ENCODE measurements at regions of chr19 and their contacts with region 1.

Region 1: DNA sequence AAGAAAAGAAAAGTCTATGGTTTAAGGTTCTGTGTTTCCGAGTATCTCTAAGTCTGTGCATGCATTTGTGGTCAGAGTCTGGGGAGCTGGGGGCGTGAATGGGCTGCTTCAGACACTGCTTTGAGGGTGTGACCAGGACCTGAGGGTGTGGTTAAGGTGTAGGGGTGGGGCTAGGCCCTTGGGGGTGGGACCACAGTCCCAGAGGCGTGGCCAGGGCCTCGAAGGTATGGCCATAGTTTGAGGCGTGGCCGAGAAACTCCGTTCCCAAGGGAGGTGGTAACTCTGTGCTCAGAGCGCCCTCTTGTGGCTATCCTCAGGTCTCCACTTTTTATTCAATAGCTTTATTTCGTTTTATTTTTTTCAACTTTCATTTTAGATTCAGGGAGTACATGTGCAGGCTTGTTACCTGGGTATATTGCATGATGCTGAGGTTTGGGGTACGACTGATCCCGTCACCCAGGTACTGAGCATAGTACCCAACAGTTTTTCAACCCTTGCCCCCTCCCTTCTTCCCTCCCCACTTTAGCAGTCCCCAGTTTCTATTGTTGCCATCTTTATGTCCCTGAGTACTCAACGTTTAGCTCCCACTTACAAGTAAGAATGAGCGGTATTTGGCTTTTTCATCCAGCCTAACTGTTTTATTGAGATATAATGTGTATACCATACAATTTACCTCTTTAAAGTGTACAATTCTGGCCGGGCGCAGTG is 7.0 kb upstream of the CBLC start:
- DNase-seq: peak; percentile 94 to 99 (median 98)
- H3K4me3 ChIP-seq: peak overlapping the region in 1 of 3 experiments; percentile 46
- H3K4me3 Mint-ChIP-seq: peak overlapping the region; percentile 69 to 74
- H3K27ac ChIP-seq: peak overlapping the region in 1 of 2 donors; percentile 64
- H3K27ac Mint-ChIP-seq: peak overlapping the region; percentile 81 to 97 (median 93)
- H3K4me1 ChIP-seq: peaks cover 35 to 40% of the 10 kb centered on the region in 2 donors
- H3K4me1 Mint-ChIP-seq: peaks cover 40% of the 10 kb centered on the region
- H3K27me3 ChIP-seq: no peaks in the 10 kb centered on the region
- H3K27me3 Mint-ChIP-seq: peaks cover 0 to 23% (median 8%) of the 10 kb centered on the region in 3 donors
- CTCF ChIP-seq: peak; percentile 76

Region 2: DNA sequence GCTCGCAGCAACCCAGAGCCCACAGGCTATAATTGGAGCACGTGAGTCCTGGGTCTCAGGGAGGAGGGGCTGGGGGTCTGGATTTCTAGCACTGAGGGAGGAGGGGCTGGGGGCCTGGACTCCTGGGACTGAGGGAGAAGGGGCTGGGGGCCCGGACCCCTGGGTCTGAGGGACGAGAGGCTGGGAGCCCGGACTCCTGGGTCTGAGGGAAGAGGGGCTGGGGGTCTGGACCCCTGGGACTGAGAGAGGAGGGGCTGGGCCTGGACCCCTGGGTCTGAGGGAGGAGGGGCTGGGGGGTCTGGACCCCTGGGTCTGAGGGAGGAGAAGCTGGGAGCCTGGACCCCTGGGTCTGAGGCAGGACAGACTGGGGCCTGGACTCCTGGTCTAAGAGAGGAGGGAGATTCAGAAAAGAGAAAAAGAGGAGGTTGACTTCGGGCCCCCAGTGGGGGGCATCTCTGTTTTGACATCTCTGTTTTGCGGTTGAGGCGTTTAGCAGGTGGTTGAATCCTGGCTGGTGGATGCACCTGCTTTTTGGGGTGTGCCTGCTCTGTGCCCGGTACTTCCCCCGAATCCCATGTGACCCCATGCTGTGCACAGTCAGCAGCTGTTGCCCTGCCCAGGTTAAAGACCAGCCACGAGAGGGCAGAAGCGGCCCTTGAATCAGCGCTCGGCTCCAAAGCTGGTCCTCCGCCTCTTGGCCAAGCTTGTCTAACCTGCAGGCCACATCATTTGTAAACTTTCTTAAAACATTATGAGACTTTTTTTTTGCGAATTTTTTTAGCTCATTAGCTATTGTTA is 116.5 kb before region 1 on chr19:
- intact Hi-C with region 1: loop called in 1 of 2 experiments (anchors 1 kb)
- DNase-seq: peak; percentile 78 to 87 (median 78)
- H3K4me3 ChIP-seq: no peak overlapping the region
- H3K4me3 Mint-ChIP-seq: no peak overlapping the region
- H3K27ac ChIP-seq: no peak overlapping the region
- H3K27ac Mint-ChIP-seq: peak overlapping the region in 4 of 7 donors; percentile 18 to 68 (median 62)
- H3K4me1 ChIP-seq: no peaks in the 10 kb centered on the region
- H3K4me1 Mint-ChIP-seq: peaks cover 8% of the 10 kb centered on the region
- H3K27me3 ChIP-seq: no peaks in the 10 kb centered on the region
- H3K27me3 Mint-ChIP-seq: peaks cover 0 to 2% (median 2%) of the 10 kb centered on the region in 3 donors
- CTCF ChIP-seq: peak; percentile 81

Region 3: DNA sequence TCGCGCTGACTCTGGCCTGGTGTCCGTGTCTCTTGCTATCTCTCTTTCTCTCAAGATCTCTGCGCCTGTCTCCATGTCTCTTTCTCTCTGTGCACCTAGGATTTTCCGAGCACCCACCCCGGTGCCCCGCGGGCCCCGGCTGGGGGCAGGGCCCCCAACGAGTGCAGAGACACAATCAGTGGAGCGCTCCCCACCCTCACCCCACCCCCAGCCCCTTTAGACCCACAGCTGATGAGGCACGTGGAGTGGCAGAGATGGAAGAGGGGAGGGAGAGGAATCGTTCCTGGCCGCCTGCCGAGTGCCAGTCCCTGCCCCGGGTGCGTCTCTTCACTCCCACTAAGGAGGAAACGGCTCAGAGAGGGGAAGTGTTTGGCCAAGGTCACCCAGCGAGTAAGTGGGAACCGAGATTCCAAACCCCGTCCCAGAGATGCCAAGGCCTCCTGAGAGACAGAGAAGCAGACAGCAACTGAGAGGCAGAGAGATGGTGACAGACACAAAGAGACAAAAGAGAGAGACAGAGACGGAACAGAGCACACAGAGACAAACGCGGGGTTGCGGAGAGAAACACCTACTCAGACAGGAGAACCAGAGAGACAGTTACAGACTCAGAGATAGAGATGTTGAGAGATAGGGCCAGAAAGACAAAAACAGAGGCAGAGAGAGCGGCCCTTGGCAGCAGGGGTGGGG is 22.8 kb before region 1 on chr19:
- intact Hi-C with region 1: loop called in 1 of 2 experiments (anchors 2 kb)
- DNase-seq: peak; percentile 76 to 85 (median 84)
- H3K4me3 ChIP-seq: peak overlapping the region; percentile 45 to 96 (median 46)
- H3K4me3 Mint-ChIP-seq: peak overlapping the region; percentile 86 to 93
- H3K27ac ChIP-seq: peak overlapping the region; percentile 96 to 99
- H3K27ac Mint-ChIP-seq: peak overlapping the region; percentile 98 to 100 (median 99)
- H3K4me1 ChIP-seq: peaks cover 85 to 87% of the 10 kb centered on the region in 2 donors
- H3K4me1 Mint-ChIP-seq: peaks cover 81% of the 10 kb centered on the region
- H3K27me3 ChIP-seq: no peaks in the 10 kb centered on the region
- H3K27me3 Mint-ChIP-seq: peaks cover 4 to 9% (median 7%) of the 10 kb centered on the region in 3 donors
- CTCF ChIP-seq: no peak

Region 4: GRCh38 chr19:44782729-44783128 is 12.0 kb after region 1 on chr19:
- intact Hi-C with region 1: no loop called
- DNase-seq: no peak
- H3K4me3 ChIP-seq: no peak overlapping the region
- H3K4me3 Mint-ChIP-seq: no peak overlapping the region
- H3K27ac ChIP-seq: no peak overlapping the region
- H3K27ac Mint-ChIP-seq: no peak overlapping the region
- H3K4me1 ChIP-seq: peaks cover 7 to 8% of the 10 kb centered on the region in 2 donors
- H3K4me1 Mint-ChIP-seq: peaks cover 8% of the 10 kb centered on the region
- H3K27me3 ChIP-seq: peaks cover 0 to 4% of the 10 kb centered on the region in 2 donors
- H3K27me3 Mint-ChIP-seq: peaks cover 0 to 14% (median 12%) of the 10 kb centered on the region in 3 donors
- CTCF ChIP-seq: no peak